GM12878 (cell line): ENCODE measurements at regions of chr1 and their contacts with region 1.

Region 1: GRCh38 chr1:205668951-205669340 is 11.4 kb downstream of the SLC45A3 start:
- DNase-seq: peak; percentile 65
- ATAC-seq: peak; percentile 63
- H3K4me3 ChIP-seq: peak overlapping the region; percentile 51; the same call in 1 of the 2 replicates
- H3K27ac ChIP-seq: peak overlapping the region; percentile 71
- H3K4me1 ChIP-seq: peaks cover 80% of the 10 kb centered on the region
- H3K27me3 ChIP-seq: no peaks in the 10 kb centered on the region
- CTCF ChIP-seq: peak in 2 of 3 experiments; percentile 31 to 48; a peak in 3 of 6 replicates
- EP300 ChIP-seq: peak; percentile 22 to 61; a peak in 2 of 4 replicates
- POLR2A ChIP-seq: no peak
- RAD21 ChIP-seq: peak; percentile 30; the same call in 1 of the 2 replicates

Region 2: GRCh38 chr1:205582471-205583291 is 86.3 kb before region 1 on chr1:
- CTCF ChIA-PET with region 1: no interaction called
- POLR2A ChIA-PET with region 1: no interaction called
- RAD21 ChIA-PET with region 1: no interaction called
- SMC1A ChIA-PET with region 1: no interaction called
- in situ Hi-C with region 1: no loop called
- intact Hi-C with region 1: no loop called
- DNase-seq: no peak
- ATAC-seq: peak; percentile 74
- H3K4me3 ChIP-seq: no peak overlapping the region
- H3K27ac ChIP-seq: no peak overlapping the region
- H3K4me1 ChIP-seq: peaks cover 10% of the 10 kb centered on the region
- H3K27me3 ChIP-seq: peaks cover 0 to 5% of the 10 kb centered on the region in 2 experiments; a peak in 2 of 4 replicates
- CTCF ChIP-seq: no peak
- EP300 ChIP-seq: no peak
- POLR2A ChIP-seq: no peak
- RAD21 ChIP-seq: no peak

Region 3: GRCh38 chr1:205680073-205680851 is 11.3 kb after region 1 on chr1 and contains the start of gene SLC45A3:
- CTCF ChIA-PET with region 1: interaction called, 38 read pairs
- POLR2A ChIA-PET with region 1: interaction called, 24 read pairs
- RAD21 ChIA-PET with region 1: interaction called, 11 read pairs
- SMC1A ChIA-PET with region 1: interaction called, 62 read pairs
- in situ Hi-C with region 1: no loop called
- intact Hi-C with region 1: no loop called
- DNase-seq: no peak
- ATAC-seq: peak; percentile 85
- H3K4me3 ChIP-seq: peak within 1 kb of the TSS; percentile 77
- H3K27ac ChIP-seq: no peak within 1 kb of the TSS
- H3K4me1 ChIP-seq: peaks cover 9% of the 10 kb centered on the region
- H3K27me3 ChIP-seq: peaks cover 0 to 4% of the 10 kb centered on the region in 2 experiments; a peak in 1 of 4 replicates
- CTCF ChIP-seq: no peak
- EP300 ChIP-seq: no peak
- POLR2A ChIP-seq: no peak
- RAD21 ChIP-seq: no peak
- polyA plus RNA-seq, gene SLC45A3: 0.26 to 0.60 TPM

Region 4: DNA sequence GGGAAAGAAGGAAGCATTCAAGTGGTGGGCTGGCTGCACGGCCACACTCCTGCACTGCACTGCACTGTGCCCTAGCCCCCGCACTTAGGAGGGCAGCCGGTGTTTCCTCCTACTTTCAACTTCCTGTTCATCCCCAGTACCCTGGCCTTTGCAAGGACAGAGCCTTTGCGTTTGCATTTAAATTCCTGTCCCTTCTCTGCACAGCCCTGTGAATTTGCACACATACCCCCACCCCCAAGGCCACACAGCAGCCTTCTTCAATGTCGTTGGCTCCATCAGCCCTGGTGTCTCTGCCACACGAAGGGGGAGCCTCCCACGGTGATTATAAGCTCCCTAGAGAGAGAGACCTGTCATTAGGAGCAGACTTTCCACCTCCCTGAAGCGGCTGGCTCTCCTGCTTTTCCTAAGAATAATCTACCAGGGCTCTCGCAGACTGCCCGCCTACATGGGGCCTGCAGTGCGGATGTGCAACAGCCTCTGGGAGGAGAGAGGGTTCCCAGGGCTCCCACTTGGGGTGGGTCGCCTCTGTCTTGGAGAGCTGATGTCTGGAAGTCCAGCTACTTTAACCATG is 24.6 kb after region 1 on chr1:
- CTCF ChIA-PET with region 1: no interaction called
- POLR2A ChIA-PET with region 1: no interaction called
- RAD21 ChIA-PET with region 1: interaction called, 4 read pairs
- SMC1A ChIA-PET with region 1: interaction called, 1,008 read pairs
- in situ Hi-C with region 1: no loop called
- intact Hi-C with region 1: no loop called
- DNase-seq: no peak
- ATAC-seq: peak; percentile 59; the same call in 2 of the 3 replicates
- H3K4me3 ChIP-seq: no peak overlapping the region
- H3K27ac ChIP-seq: no peak overlapping the region
- H3K4me1 ChIP-seq: 0 out of 2 replicates have a peak, but pooled peaks cover 3% of the 10 kb centered on the region
- H3K27me3 ChIP-seq: no peaks in the 10 kb centered on the region
- CTCF ChIP-seq: no peak
- EP300 ChIP-seq: no peak
- POLR2A ChIP-seq: no peak
- RAD21 ChIP-seq: no peak

Region 5: DNA sequence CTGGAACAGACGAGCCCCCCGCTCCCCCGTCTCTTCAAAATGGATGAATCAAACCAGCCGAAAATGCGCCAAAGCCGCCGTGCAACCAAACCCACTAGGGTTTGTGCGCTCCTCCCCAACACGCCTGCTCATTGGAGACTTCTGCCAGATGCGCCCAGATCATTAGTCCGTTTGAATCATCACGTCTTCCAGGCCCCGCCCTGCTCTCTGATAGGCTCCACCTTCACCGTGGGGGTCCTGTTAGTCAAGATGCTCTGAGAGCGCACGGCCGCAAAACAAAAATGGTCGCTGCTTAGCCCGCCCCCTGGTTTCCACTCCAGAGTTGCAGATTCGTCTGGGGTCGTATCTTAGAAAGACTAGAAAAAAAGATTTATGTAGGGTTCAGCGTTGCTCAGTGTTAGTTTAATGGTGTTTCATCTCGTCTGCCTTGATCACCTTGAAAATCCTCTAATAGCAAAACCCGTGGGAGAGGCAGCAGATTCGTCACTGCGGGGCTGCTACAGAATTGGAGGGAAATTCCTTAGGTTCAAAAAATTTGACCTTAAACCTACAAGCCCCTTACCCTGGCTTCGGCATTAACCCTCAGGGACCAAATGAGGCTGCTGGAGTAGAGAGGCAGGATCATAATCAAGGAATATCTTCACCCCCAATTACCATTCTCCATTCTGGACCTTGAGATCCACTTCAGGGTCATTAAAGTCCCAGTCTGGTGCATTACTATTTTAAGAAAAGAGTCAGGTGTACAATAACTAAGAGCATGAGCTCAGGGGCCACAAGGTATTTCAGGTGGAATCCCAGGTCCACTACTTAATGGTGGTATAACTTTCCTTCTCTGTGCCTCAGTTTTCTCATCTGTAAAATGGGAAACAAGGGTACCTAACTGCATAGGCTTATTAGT is 81.4 kb after region 1 on chr1 and contains the start of gene NUCKS1:
- CTCF ChIA-PET with region 1: interaction called, 14 read pairs
- POLR2A ChIA-PET with region 1: interaction called, 8 read pairs
- RAD21 ChIA-PET with region 1: interaction called, 12 read pairs
- SMC1A ChIA-PET with region 1: interaction called, 6 read pairs
- in situ Hi-C with region 1: no loop called
- intact Hi-C with region 1: no loop called
- DNase-seq: peak; percentile 93
- ATAC-seq: peak; percentile 87
- H3K4me3 ChIP-seq: peak within 1 kb of the TSS; percentile 90
- H3K27ac ChIP-seq: peak within 1 kb of the TSS; percentile 99
- H3K4me1 ChIP-seq: peaks cover 4% of the 10 kb centered on the region
- H3K27me3 ChIP-seq: no peaks in the 10 kb centered on the region
- CTCF ChIP-seq: no peak
- EP300 ChIP-seq: peak in 1 of 2 experiments; percentile 98; a peak in 2 of 4 replicates
- POLR2A ChIP-seq: no peak
- RAD21 ChIP-seq: no peak
- polyA plus RNA-seq, gene NUCKS1: 40.5 to 41.7 TPM

Region 6: GRCh38 chr1:205775015-205775716 is 106.2 kb after region 1 on chr1 and contains the start of gene RAB29:
- CTCF ChIA-PET with region 1: interaction called, 6 read pairs
- POLR2A ChIA-PET with region 1: interaction called, 28 read pairs
- RAD21 ChIA-PET with region 1: interaction called, 24 read pairs
- SMC1A ChIA-PET with region 1: interaction called, 12 read pairs
- in situ Hi-C with region 1: no loop called
- intact Hi-C with region 1: no loop called
- DNase-seq: peak; percentile 57
- ATAC-seq: peak; percentile 83
- H3K4me3 ChIP-seq: peak within 1 kb of the TSS; percentile 88
- H3K27ac ChIP-seq: peak within 1 kb of the TSS; percentile 63
- H3K4me1 ChIP-seq: peaks cover 12% of the 10 kb centered on the region
- H3K27me3 ChIP-seq: no peaks in the 10 kb centered on the region
- CTCF ChIP-seq: no peak
- EP300 ChIP-seq: peak in 1 of 2 experiments; percentile 46; a peak in 1 of 4 replicates
- POLR2A ChIP-seq: peak; percentile 50; the same call in 1 of the 2 replicates
- RAD21 ChIP-seq: no peak
- polyA plus RNA-seq, gene RAB29: 12.6 to 16.2 TPM

Region 7: GRCh38 chr1:206012086-206012859 is 343.3 kb after region 1 on chr1:
- CTCF ChIA-PET with region 1: no interaction called
- POLR2A ChIA-PET with region 1: no interaction called
- RAD21 ChIA-PET with region 1: no interaction called
- SMC1A ChIA-PET with region 1: no interaction called
- in situ Hi-C with region 1: no loop called
- intact Hi-C with region 1: no loop called
- DNase-seq: peak; percentile 66
- ATAC-seq: peak; percentile 99
- H3K4me3 ChIP-seq: no peak overlapping the region
- H3K27ac ChIP-seq: no peak overlapping the region
- H3K4me1 ChIP-seq: peaks cover 17% of the 10 kb centered on the region
- H3K27me3 ChIP-seq: no peaks in the 10 kb centered on the region
- CTCF ChIP-seq: no peak
- EP300 ChIP-seq: peak in 1 of 2 experiments; percentile 69; a peak in 2 of 4 replicates
- POLR2A ChIP-seq: peak; percentile 55
- RAD21 ChIP-seq: no peak